Activated CD4-positive, alpha-beta memory T cell treated with anti-CD3 and anti-CD28 coated beads for 36 hours (primary cell): ENCODE measurements at regions of chr13 and their contacts with region 1.

Region 1: GRCh38 chr13:98672944-98673545 is 79.4 kb downstream of the SLC15A1 start:
- DNase-seq: peak; percentile 58
- H3K4me3 Mint-ChIP-seq: no peak overlapping the region
- H3K27ac Mint-ChIP-seq: no peak overlapping the region
- H3K4me1 Mint-ChIP-seq: no peaks in the 10 kb centered on the region
- H3K27me3 Mint-ChIP-seq: peaks cover 2% of the 10 kb centered on the region

Region 2: DNA sequence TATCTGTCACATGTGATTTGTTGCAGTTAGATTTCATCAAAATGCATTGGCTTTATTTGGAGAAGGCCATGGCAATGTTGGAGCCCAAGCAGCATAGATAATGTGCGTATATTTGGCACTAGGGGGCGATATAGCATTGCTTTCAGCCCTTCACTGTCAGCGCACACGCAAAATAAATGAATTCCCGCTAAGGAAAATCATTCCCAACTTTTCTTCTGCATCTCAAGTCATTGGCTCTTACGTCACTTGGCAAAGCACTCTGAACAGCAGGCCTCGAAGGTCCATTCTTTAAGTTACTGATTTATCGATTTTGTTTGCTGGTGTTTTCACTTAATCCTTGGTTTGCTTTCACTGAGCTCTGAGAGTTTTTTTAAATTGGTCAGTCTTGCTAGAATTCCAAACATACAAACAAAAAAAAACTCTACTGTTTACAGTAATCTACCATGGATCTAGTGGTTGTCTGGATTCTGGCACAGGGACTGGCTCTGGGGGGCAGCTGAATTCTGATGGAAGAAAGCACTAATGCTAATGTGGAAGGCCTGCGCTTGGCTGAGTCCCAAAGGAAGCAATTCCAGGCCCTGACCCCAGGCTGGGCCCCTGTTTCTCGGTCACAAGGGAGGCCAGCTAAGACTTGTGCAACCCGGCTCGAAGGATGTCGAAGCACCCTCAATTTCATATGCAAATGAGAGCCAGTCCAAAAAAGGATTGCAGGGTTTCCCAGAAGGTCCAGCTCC is 817.3 kb before region 1 on chr13:
- CTCF ChIA-PET with region 1: interaction called, 5 read pairs
- POLR2A ChIA-PET with region 1: no interaction called
- intact Hi-C with region 1: loop called (anchors 5 kb)
- DNase-seq: peak; percentile 22
- H3K4me3 Mint-ChIP-seq: no peak overlapping the region
- H3K27ac Mint-ChIP-seq: no peak overlapping the region
- H3K4me1 Mint-ChIP-seq: no peaks in the 10 kb centered on the region
- H3K27me3 Mint-ChIP-seq: peaks cover 3% of the 10 kb centered on the region

Region 3: DNA sequence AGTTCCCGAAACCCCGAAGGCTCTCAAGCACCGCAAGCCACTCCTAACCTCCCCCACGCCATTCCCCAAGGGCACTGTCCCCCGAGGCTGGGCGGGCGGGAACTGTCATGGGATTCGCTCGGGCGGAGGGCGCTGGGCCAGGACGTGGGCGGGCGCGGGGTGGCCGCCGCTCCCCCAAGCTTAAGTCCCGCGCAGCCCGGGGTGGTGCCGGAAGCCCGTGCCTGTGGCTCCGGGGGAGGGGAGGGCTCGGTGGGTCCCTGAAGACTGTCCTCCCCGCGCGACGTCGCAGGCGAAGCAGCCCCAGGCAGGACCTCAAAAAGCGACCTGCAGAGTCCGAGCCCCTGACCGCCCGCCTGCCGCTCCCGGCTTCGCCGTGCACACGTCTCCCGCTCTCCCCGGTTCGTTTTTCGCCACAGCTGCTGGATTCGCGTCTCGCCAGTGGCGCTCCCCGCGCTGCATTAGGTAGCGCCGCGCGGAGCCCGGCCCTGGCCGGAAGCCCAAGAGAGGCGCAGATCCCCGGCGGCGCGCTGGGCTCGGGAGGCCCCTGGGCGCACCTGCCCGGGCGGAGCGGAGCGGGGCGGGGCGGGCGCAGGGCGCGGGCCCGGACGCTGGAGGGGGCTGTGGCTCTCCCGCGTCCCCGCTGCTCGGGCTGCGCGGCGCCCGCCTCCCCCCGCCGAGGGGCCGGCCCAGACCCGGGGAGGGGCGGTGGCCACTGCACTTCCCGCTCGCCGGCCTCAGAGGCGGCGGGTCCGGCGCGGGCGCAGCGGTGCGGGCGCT is 530.5 kb before region 1 on chr13 and contains the start of gene FARP1:
- CTCF ChIA-PET with region 1: no interaction called
- POLR2A ChIA-PET with region 1: no interaction called
- intact Hi-C with region 1: loop called (anchors 10 kb)
- DNase-seq: peak; percentile 62
- H3K4me3 Mint-ChIP-seq: peak within 1 kb of the TSS; percentile 61
- H3K27ac Mint-ChIP-seq: no peak within 1 kb of the TSS
- H3K4me1 Mint-ChIP-seq: peaks cover 5% of the 10 kb centered on the region
- H3K27me3 Mint-ChIP-seq: peaks cover 51% of the 10 kb centered on the region
- total RNA-seq, gene FARP1: 0.56 to 0.64 TPM

Region 4: GRCh38 chr13:98345536-98345935 is 327.5 kb before region 1 on chr13:
- CTCF ChIA-PET with region 1: no interaction called
- POLR2A ChIA-PET with region 1: no interaction called
- intact Hi-C with region 1: loop called (anchors 2 kb)
- DNase-seq: peak; percentile 12
- H3K4me3 Mint-ChIP-seq: no peak overlapping the region
- H3K27ac Mint-ChIP-seq: no peak overlapping the region
- H3K4me1 Mint-ChIP-seq: no peaks in the 10 kb centered on the region
- H3K27me3 Mint-ChIP-seq: peaks cover 3% of the 10 kb centered on the region

Region 5: DNA sequence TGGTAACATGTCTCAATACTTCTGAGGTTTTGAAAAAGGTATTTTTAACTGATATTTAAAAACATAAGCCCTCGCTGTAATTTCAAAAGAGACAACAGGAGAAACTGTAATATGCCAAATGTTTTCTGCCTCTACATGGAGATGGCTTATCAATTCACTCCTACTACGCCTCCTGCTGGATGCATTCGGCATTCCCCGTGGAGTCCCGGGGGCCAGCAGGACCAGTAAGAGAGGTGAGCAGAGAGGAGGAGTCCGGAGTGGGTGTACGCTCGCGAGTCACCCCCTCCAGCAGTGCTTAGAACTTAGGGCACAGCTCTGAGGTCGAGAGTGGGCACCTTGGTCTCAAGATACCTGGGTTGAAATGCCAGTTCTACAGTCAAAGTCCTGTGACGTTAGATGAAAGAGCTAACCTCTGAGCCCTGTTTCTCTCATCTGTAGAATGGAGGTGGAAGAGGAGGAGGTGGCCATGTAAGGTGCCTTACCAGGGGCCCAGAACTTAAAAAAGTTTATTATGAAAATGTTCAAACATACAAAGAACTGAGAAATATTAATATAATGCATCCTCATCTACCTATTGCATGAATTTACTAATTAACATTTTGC is 206.3 kb before region 1 on chr13:
- CTCF ChIA-PET with region 1: interaction called, 10 read pairs
- POLR2A ChIA-PET with region 1: no interaction called
- intact Hi-C with region 1: no loop called
- DNase-seq: peak; percentile 64
- H3K4me3 Mint-ChIP-seq: no peak overlapping the region
- H3K27ac Mint-ChIP-seq: peak overlapping the region; percentile 38
- H3K4me1 Mint-ChIP-seq: peaks cover 19% of the 10 kb centered on the region
- H3K27me3 Mint-ChIP-seq: no peaks in the 10 kb centered on the region

Region 6: GRCh38 chr13:98717256-98717655 is 44.2 kb after region 1 on chr13:
- CTCF ChIA-PET with region 1: no interaction called
- POLR2A ChIA-PET with region 1: no interaction called
- intact Hi-C with region 1: no loop called
- DNase-seq: no peak
- H3K4me3 Mint-ChIP-seq: no peak overlapping the region
- H3K27ac Mint-ChIP-seq: no peak overlapping the region
- H3K4me1 Mint-ChIP-seq: no peaks in the 10 kb centered on the region
- H3K27me3 Mint-ChIP-seq: no peaks in the 10 kb centered on the region

Region 7: DNA sequence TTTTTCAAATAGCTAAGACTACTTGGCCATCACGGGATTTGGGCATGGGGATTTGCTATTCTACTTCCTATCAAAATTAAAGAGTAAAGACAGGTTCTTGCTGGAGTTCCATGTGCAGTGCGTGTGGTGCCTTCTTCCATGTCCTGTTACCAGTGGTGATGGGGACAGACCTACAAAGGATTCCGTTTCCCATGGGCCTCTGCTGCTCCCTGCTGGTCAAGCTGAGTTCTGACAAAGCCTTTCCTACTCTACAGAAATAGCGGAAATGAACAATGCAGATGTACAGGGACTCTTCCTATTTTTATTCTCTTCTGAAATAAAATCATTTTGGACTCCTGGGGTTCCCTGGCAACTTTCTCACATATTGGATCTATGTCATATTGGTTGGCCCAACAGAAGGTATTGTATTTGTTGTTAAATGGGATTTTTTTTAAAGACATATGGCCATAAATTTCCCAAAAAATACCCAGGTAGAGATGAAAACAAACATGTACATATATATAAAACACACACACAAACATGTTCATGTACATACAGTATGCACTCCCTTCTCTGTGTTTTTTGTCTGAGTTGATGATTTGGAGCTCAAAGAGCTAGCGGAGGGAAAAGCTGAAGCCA is 169.9 kb after region 1 on chr13:
- CTCF ChIA-PET with region 1: interaction called, 5 read pairs
- POLR2A ChIA-PET with region 1: no interaction called
- intact Hi-C with region 1: loop called (anchors 5 kb)
- DNase-seq: peak; percentile 79
- H3K4me3 Mint-ChIP-seq: no peak overlapping the region
- H3K27ac Mint-ChIP-seq: no peak overlapping the region
- H3K4me1 Mint-ChIP-seq: no peaks in the 10 kb centered on the region
- H3K27me3 Mint-ChIP-seq: no peaks in the 10 kb centered on the region